ENCODE measurements at regions of chr15 and their contacts with region 1.

Region 1: GRCh38 chr15:82726816-82727215 is 17.1 kb upstream of the AP3B2 start:
- DNase-seq: no peak
- ATAC-seq: no peak
- H3K4me3 ChIP-seq: no peak overlapping the region
- H3K27ac ChIP-seq: no peak overlapping the region
- H3K4me1 ChIP-seq: no peaks in the 10 kb centered on the region
- H3K27me3 ChIP-seq: no peaks in the 10 kb centered on the region
- CTCF ChIP-seq: no peak
- POLR2A ChIP-seq: no peak
- RAD21 ChIP-seq: no peak

Region 2: DNA sequence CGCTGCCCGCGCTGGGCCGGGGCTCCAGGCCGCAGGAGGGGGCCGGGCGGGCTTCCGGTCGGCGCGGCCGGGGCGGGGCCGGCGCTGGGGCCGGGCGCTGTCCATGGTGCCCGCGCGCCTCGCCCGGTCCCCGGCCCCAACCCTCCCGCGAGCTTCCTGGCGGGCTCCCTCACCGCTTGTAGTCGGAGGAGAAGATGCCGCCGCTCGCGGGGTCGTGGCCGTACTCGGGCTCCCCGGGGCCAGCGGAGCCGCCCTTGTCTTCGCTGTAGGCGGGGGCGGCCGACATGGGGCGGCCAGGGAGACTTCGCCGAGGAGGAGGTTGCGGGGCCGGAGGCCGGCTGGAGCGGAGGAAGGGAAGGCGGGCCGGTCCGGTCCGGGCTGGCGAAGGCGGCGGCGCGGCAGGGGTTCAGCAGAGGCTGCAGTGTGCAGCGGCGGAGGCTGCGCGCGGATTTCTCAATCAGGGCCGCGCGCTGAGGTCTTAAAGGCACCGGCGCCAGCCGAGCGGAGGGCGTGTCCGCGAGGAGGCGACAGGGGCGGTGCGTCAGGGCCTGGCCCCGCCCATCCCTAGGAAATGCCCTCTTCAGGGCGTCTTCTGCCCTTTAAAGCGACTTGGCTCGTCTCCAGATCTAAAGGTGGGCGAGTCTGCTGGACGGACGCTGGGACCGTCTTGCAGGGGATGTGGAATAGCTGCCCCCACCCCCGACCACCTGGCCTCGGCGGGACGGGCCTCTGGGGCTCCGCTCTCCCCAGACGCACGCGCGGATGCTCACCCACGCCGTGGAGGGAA is 17.2 kb before region 1 on chr15 and contains the start of gene AP3B2:
- CTCF ChIA-PET with region 1: no interaction called
- POLR2A ChIA-PET with region 1: no interaction called
- RAD21 ChIA-PET with region 1: no interaction called
- intact Hi-C with region 1: no loop called
- DNase-seq: no peak
- ATAC-seq: peak; percentile 94
- H3K4me3 ChIP-seq: peak within 1 kb of the TSS; percentile 33 to 55
- H3K27ac ChIP-seq: no peak within 1 kb of the TSS
- H3K4me1 ChIP-seq: peaks cover 0 to 4% of the 10 kb centered on the region in 2 experiments; a peak in 1 of 4 replicates
- H3K27me3 ChIP-seq: no peaks in the 10 kb centered on the region
- CTCF ChIP-seq: no peak
- POLR2A ChIP-seq: no peak
- RAD21 ChIP-seq: no peak
- total RNA-seq, gene AP3B2: 0.07 TPM

Region 3: GRCh38 chr15:82789491-82789890 is 62.7 kb after region 1 on chr15:
- CTCF ChIA-PET with region 1: no interaction called
- POLR2A ChIA-PET with region 1: no interaction called
- RAD21 ChIA-PET with region 1: no interaction called
- intact Hi-C with region 1: loop called (anchors 10 kb)
- DNase-seq: no peak
- ATAC-seq: no peak
- H3K4me3 ChIP-seq: no peak overlapping the region
- H3K27ac ChIP-seq: no peak overlapping the region
- H3K4me1 ChIP-seq: no peaks in the 10 kb centered on the region
- H3K27me3 ChIP-seq: no peaks in the 10 kb centered on the region
- CTCF ChIP-seq: no peak
- POLR2A ChIP-seq: no peak
- RAD21 ChIP-seq: no peak

Measured in HCT116 (cell line).